ENCODE measurements at regions of chr18 and their contacts with region 1.

Region 1: DNA sequence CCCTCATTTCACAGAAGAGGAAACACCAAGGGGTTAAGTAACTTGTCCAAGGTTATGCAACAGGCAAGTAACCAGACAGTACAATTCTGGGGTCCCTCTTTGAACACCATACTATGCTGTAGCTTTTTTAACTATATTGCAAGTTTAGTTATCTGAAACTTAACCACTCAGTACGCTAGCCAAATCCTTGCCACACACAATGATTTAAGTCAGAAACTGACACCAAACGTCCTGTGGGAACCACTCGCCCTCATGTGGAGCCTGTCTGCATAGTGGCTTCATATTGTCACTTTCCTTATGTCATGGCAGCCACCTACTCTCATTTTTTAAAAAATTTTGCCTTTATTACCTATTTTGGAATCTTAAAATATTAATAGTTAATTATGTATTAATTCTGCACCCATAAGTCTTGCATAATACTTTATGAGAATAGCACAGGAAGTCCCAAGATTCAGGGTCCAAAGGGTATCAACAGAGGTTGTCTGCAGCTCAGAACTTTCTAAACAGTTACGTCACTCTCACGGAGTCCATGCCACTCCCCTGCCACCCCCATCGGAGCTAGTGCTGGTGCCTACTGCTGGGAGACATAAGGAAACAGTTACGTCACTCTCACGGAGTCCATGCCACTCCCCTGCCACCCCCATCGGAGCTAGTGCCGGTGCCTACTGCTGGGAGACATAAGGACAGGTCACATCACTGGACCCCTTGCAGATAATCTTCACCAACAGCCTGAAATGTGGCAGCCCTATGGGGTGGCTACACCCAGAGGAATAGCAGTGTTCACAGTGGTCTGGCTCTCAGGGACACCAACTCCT is 99.0 kb downstream of the L3MBTL4 start:
- DNase-seq: no peak
- H3K4me3 ChIP-seq: no peak overlapping the region
- H3K27ac ChIP-seq: no peak overlapping the region
- H3K4me1 ChIP-seq: peaks cover 1% of the 10 kb centered on the region
- H3K27me3 ChIP-seq: no peaks in the 10 kb centered on the region
- CTCF ChIP-seq: no peak
- EP300 ChIP-seq: no peak
- POLR2A ChIP-seq: no peak

Region 2: DNA sequence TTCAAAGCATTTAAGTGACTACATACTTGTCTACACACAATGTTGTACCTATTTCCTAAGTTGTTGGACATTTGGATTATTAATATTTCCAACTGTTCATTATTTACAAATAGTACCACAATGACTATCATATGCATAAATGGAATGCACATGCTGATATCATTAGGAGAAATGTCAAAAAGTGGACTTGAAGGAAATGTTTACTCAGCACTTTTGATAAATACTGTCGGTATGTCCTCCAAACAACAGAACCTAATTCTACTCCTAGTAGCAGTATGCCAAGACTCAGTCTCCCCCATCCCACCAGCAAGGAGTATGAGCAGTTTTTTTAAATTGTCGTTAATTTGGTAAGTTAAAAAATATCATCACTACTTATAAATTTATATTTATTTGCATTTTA is 17.8 kb before region 1 on chr18:
- intact Hi-C with region 1: loop called in 1 of 4 experiments (anchors 1 kb)
- DNase-seq: no peak
- H3K4me3 ChIP-seq: no peak overlapping the region
- H3K27ac ChIP-seq: no peak overlapping the region
- H3K4me1 ChIP-seq: no peaks in the 10 kb centered on the region
- H3K27me3 ChIP-seq: no peaks in the 10 kb centered on the region
- CTCF ChIP-seq: no peak
- EP300 ChIP-seq: no peak
- POLR2A ChIP-seq: no peak

Region 3: GRCh38 chr18:6370886-6371635 is 55.3 kb after region 1 on chr18:
- intact Hi-C with region 1: loop called in 1 of 4 experiments (anchors 10 kb)
- DNase-seq: peak in 4 of 5 donors; percentile 36 to 56 (median 45)
- H3K4me3 ChIP-seq: no peak overlapping the region
- H3K27ac ChIP-seq: no peak overlapping the region
- H3K4me1 ChIP-seq: peaks cover 6% of the 10 kb centered on the region
- H3K27me3 ChIP-seq: no peaks in the 10 kb centered on the region
- CTCF ChIP-seq: no peak
- EP300 ChIP-seq: no peak
- POLR2A ChIP-seq: no peak

Region 4: DNA sequence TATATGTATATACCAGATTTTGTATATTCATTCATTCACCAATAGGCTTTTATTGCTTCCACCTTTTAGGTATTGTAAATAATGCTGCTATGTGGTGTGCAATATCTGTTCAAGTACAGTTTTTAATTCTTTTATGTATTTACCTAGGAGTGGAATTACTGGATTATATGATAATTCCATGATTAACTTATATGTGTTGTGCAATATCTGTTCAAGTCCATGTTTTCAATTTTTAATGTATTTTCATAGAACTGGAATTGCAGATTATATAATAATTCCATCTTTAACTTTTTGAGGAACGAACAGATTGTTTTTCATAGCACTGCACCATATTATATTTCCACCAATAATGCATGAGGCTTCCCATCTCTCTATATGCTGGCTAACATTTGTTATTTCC is 149.6 kb after region 1 on chr18:
- intact Hi-C with region 1: no loop called
- DNase-seq: no peak
- H3K4me3 ChIP-seq: no peak overlapping the region
- H3K27ac ChIP-seq: no peak overlapping the region
- H3K4me1 ChIP-seq: no peaks in the 10 kb centered on the region
- H3K27me3 ChIP-seq: no peaks in the 10 kb centered on the region
- CTCF ChIP-seq: no peak
- EP300 ChIP-seq: no peak
- POLR2A ChIP-seq: no peak

Measured in ovary (tissue), 10 donors.